ENCODE measurements at regions of chr17 and their contacts with region 1.

Region 1: GRCh38 chr17:35088881-35089585 is 25.5 kb upstream of the RFFL start:
- DNase-seq: peak; percentile 82
- H3K4me3 ChIP-seq: peak overlapping the region; percentile 57 to 80 (median 59)
- H3K27ac ChIP-seq: peak overlapping the region; percentile 84
- H3K4me1 ChIP-seq: peaks cover 44% of the 10 kb centered on the region
- H3K27me3 ChIP-seq: no peaks in the 10 kb centered on the region
- CTCF ChIP-seq: peak; percentile 49 to 66

Region 2: DNA sequence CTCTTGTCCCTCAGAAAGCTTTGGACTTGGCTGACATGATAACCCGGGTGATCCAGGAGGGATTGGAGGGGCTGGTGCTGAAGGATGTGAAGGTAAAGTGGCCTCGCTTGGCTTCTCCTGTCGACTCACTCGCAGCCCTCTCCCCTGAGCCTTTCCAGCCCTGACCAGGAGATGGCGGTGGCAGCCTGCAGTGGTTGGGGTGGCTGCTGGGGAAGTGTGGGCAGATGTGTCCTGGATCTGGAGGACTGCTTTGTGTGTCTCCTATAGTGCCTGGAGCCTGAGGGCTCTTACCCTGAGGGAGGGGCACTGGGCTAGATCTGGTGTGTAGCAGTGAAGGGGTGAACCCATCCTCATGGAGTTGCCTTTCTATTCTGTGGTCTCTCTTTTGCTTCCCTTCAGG is 90.8 kb before region 1 on chr17:
- CTCF ChIA-PET with region 1: no interaction called
- dilution Hi-C with region 1: no loop called
- in situ Hi-C with region 1: no loop called
- intact Hi-C with region 1: loop called (anchors 1 kb)
- DNase-seq: peak; percentile 57
- H3K4me3 ChIP-seq: no peak overlapping the region
- H3K27ac ChIP-seq: no peak overlapping the region
- H3K4me1 ChIP-seq: no peaks in the 10 kb centered on the region
- H3K27me3 ChIP-seq: no peaks in the 10 kb centered on the region
- CTCF ChIP-seq: peak; percentile 95 to 98

Region 3: GRCh38 chr17:35022536-35023063 is 66.4 kb before region 1 on chr17:
- CTCF ChIA-PET with region 1: no interaction called
- dilution Hi-C with region 1: no loop called
- in situ Hi-C with region 1: no loop called
- intact Hi-C with region 1: loop called (anchors 1 kb)
- DNase-seq: peak; percentile 92
- H3K4me3 ChIP-seq: no peak overlapping the region
- H3K27ac ChIP-seq: peak overlapping the region; percentile 94
- H3K4me1 ChIP-seq: peaks cover 38% of the 10 kb centered on the region
- H3K27me3 ChIP-seq: no peaks in the 10 kb centered on the region
- CTCF ChIP-seq: peak; percentile 15 to 26

Region 4: DNA sequence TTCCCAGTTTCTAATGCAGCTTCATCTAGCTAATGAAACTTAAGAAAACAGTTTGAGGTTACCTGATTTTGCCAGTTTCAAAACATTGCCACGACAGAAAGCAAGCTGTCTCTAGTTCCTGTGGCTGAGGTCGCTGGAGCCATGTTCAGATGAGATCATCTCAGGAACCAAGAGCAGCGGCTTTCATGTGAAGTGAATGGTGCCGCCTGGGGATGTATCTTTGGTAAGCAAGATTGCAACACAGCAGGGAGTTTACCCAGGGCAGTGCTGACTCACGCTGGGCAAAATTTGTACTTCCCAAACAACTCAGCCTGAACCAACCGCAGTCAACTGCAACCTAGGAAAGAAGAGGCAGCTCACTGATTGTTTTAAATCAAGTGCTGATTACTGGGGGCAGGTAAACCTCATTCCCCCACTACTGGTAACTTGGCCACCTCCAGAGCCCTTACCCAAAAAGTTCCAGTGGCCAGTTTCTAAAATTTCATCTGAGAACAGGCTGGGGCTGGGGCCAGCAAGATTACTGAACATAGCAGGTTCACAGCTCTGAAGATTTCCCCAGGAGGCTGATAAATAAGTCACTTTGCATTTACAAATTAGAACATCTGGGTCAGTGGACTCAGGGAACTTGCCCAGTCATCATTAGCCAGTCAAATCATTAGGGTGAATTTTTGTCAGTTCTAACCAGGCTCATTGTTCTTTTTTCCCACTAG is 25.4 kb before region 1 on chr17 and contains the start of gene RFFL:
- CTCF ChIA-PET with region 1: interaction called, 5 read pairs
- dilution Hi-C with region 1: no loop called
- in situ Hi-C with region 1: no loop called
- intact Hi-C with region 1: loop called (anchors 1 kb)
- DNase-seq: peak; percentile 100
- H3K4me3 ChIP-seq: no peak within 1 kb of the TSS
- H3K27ac ChIP-seq: peak within 1 kb of the TSS; percentile 96
- H3K4me1 ChIP-seq: peaks cover 23% of the 10 kb centered on the region
- H3K27me3 ChIP-seq: no peaks in the 10 kb centered on the region
- CTCF ChIP-seq: peak in 1 of 2 donors; percentile 6
- total RNA-seq, gene RFFL: 15.7 to 30.2 TPM

Region 5: DNA sequence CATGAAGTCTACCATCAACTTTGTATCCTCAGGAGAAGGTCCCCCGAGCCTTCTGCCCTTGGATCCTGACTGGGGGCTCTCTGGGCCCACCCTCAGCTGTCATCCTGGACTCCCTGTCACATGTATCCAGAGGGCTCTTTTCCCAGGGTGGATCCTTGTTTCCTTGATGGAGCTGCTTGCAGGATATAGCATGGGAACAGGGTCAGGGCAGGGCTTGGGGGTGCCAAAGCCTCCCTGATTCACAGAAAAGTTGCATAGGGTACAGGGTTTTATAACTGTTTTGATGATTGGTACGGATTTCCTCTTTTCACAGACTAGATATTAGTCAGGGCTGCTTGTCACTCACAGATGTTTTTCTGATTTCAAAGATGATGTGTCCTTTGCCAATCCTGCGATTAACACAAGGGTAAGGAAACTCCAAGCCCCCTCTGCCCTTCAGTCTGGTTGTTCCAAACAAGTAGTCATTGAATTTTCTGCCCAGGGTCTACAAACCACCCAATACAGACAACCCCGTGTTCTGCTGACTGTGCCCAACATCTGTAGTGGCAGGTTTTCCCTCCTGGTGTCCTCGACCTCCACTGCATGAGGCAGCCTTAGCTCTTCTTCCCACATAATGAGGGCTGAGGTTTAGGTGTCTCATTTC is 125.7 kb after region 1 on chr17:
- CTCF ChIA-PET with region 1: no interaction called
- dilution Hi-C with region 1: no loop called
- in situ Hi-C with region 1: no loop called
- intact Hi-C with region 1: no loop called
- DNase-seq: no peak
- H3K4me3 ChIP-seq: no peak overlapping the region
- H3K27ac ChIP-seq: no peak overlapping the region
- H3K4me1 ChIP-seq: no peaks in the 10 kb centered on the region
- H3K27me3 ChIP-seq: no peaks in the 10 kb centered on the region
- CTCF ChIP-seq: no peak

Measured in mammary epithelial cell (primary cell).